ENCODE measurements at regions of chr12 and their contacts with region 1.

Region 1: GRCh38 chr12:129409281-129409680 is 494.5 kb downstream of the TMEM132D start:
- DNase-seq: no peak

Region 2: GRCh38 chr12:128133321-128134073 is 1275.8 kb before region 1 on chr12:
- intact Hi-C with region 1: loop called in 1 of 2 experiments (anchors 5 kb)
- DNase-seq: no peak

Region 3: GRCh38 chr12:129446696-129447095 is 37.4 kb after region 1 on chr12:
- intact Hi-C with region 1: loop called in 1 of 2 experiments (anchors 1 kb)
- DNase-seq: no peak